Gastrocnemius medialis (tissue), 4 donors: ENCODE measurements at regions of chr12 and their contacts with region 1.

Region 1: DNA sequence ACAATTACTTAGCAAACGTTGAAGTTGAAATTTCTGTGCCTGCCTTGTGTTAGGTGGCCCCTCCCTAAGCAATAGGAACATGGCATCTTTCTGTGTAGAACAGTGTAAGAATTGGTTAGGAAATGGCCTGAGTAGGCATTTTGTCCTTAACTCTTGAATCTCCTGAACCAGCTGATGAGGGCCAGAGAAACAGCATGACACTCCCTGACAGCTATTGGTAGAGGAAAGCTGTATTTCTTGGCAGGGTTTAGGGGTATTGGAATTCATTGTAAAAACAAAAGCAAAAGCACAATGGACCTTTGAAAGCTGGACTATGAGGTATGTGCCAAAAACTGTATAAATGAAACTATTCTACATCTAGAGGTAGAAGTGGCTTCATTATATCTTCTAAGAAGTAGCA is 40.6 kb upstream of the LRTM2 start:
- DNase-seq: no peak
- ATAC-seq: peak in 1 of 2 donors; percentile 34
- H3K4me3 ChIP-seq: no peak overlapping the region
- H3K27ac ChIP-seq: peak overlapping the region in 1 of 4 donors; percentile 35
- H3K4me1 ChIP-seq: peaks cover 52% of the 10 kb centered on the region in 2 donors
- H3K27me3 ChIP-seq: no peaks in the 10 kb centered on the region
- CTCF ChIP-seq: no peak
- POLR2A ChIP-seq: no peak

Region 2: GRCh38 chr12:1706633-1706981 is 73.2 kb before region 1 on chr12:
- in situ Hi-C with region 1: loop called in 1 of 4 experiments (anchors 10 kb)
- intact Hi-C with region 1: no loop called
- DNase-seq: no peak
- ATAC-seq: no peak
- H3K4me3 ChIP-seq: no peak overlapping the region
- H3K27ac ChIP-seq: no peak overlapping the region
- H3K4me1 ChIP-seq: peaks cover 53 to 61% of the 10 kb centered on the region in 2 donors
- H3K27me3 ChIP-seq: no peaks in the 10 kb centered on the region
- CTCF ChIP-seq: no peak
- POLR2A ChIP-seq: no peak

Region 3: GRCh38 chr12:1795785-1796514 is 16.2 kb after region 1 on chr12:
- in situ Hi-C with region 1: no loop called
- intact Hi-C with region 1: no loop called
- DNase-seq: peak; percentile 79 to 89
- ATAC-seq: peak; percentile 79 to 82
- H3K4me3 ChIP-seq: peak overlapping the region; percentile 51 to 67 (median 59)
- H3K27ac ChIP-seq: peak overlapping the region; percentile 72 to 80 (median 74)
- H3K4me1 ChIP-seq: peaks cover 25 to 26% of the 10 kb centered on the region in 2 donors
- H3K27me3 ChIP-seq: no peaks in the 10 kb centered on the region
- CTCF ChIP-seq: peak; percentile 88 to 100 (median 99)
- POLR2A ChIP-seq: peak; percentile 36 to 56